ENCODE measurements at regions of chr12 and their contacts with region 1.

Region 1: GRCh38 chr12:26212396-26212795 is 17.0 kb downstream of the SSPN start:
- DNase-seq: no peak
- H3K4me3 ChIP-seq: peak overlapping the region in 1 of 3 donors; percentile 4
- H3K27ac ChIP-seq: no peak overlapping the region
- H3K4me1 ChIP-seq: no peaks in the 10 kb centered on the region
- H3K27me3 ChIP-seq: no peaks in the 10 kb centered on the region
- CTCF ChIP-seq: no peak
- POLR2A ChIP-seq: no peak

Region 2: DNA sequence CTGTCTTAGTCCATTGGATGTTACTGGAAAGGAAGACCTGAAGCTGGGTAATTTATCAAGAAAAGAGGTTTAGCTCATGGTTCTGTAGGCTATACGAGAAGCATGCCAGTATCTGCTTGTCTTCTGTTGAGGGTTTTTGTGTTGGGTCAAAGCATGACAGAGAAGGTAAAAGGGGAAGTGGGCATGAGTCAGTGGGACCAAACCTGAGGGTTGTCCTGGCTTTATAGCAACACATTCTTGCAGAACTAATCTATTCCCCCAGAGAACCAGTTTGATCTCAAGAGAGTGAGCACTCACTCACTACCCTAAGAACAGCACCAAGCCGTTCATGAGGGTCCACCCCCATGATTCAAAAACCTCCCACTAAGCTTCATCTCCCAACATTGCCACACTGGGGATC is 942.7 kb before region 1 on chr12:
- intact Hi-C with region 1: no loop called
- DNase-seq: no peak
- H3K4me3 ChIP-seq: no peak overlapping the region
- H3K27ac ChIP-seq: no peak overlapping the region
- H3K4me1 ChIP-seq: no peaks in the 10 kb centered on the region
- H3K27me3 ChIP-seq: no peaks in the 10 kb centered on the region
- CTCF ChIP-seq: no peak
- POLR2A ChIP-seq: no peak

Region 3: GRCh38 chr12:26195641-26196420 is 16.6 kb before region 1 on chr12:
- intact Hi-C with region 1: loop called (anchors 1 kb)
- DNase-seq: peak; percentile 43 to 60
- H3K4me3 ChIP-seq: peak overlapping the region; percentile 58 to 88 (median 73)
- H3K27ac ChIP-seq: peak overlapping the region; percentile 93 to 96
- H3K4me1 ChIP-seq: peaks cover 0 to 11% of the 10 kb centered on the region in 2 donors
- H3K27me3 ChIP-seq: no peaks in the 10 kb centered on the region
- CTCF ChIP-seq: no peak
- POLR2A ChIP-seq: no peak

Measured in breast epithelium (tissue), 4 donors.